SK-N-SH (cell line): ENCODE measurements at regions of chr2 and their contacts with region 1.

Region 1: DNA sequence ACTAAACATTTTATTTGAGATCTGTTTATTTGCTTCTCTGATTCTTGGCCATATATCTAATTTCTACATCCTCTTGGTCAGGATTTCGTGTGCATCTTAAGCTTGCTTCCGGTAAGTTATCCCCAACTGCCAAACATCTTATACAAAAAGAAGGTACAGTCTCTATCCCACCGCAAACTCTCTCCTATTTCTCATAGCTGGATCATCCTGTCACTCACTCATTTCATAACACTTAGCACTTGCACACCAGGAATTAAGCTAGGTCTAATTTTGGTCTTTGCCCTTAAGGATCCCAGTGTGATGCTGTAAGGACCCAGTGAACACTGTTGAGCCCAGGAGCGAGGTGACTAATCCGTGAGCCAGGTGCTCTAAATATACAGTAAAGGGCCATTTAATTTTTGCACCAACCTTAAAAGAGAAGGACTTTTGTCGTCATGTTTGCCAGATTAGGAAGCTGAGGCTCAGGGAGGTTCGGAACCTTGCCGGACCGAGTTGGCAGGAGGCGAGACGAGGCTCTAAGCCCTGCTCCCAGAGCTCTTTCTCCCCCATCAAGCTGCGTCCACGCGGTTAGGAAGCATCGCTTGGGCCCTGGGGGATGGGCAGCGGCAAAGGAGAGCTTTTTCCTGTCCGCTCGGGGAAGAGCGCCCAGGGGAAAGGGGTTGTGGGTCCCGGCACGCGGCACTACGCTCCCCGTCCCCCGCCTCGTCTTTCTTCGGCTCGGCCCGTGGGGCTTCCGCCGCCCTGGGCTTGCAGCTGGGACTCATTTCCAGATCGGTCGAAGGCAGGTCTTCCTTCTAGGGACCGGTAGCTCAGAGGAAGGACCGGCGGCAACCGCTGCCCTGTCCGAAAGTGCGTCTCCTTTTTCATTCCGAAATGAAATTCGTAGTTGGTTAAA is 4.1 kb upstream of the ITPRIPL1 start:
- DNase-seq: peak; percentile 76
- H3K4me3 ChIP-seq: peak overlapping the region; percentile 56 to 64
- H3K27ac ChIP-seq: peak overlapping the region; percentile 11 to 65; a peak in 2 of 4 replicates
- H3K4me1 ChIP-seq: peaks cover 4 to 10% of the 10 kb centered on the region in 2 experiments; a peak in 3 of 4 replicates
- H3K27me3 ChIP-seq: no peaks in the 10 kb centered on the region
- CTCF ChIP-seq: no peak
- EP300 ChIP-seq: no peak; a peak in 1 of 4 replicates
- RAD21 ChIP-seq: no peak

Region 2: DNA sequence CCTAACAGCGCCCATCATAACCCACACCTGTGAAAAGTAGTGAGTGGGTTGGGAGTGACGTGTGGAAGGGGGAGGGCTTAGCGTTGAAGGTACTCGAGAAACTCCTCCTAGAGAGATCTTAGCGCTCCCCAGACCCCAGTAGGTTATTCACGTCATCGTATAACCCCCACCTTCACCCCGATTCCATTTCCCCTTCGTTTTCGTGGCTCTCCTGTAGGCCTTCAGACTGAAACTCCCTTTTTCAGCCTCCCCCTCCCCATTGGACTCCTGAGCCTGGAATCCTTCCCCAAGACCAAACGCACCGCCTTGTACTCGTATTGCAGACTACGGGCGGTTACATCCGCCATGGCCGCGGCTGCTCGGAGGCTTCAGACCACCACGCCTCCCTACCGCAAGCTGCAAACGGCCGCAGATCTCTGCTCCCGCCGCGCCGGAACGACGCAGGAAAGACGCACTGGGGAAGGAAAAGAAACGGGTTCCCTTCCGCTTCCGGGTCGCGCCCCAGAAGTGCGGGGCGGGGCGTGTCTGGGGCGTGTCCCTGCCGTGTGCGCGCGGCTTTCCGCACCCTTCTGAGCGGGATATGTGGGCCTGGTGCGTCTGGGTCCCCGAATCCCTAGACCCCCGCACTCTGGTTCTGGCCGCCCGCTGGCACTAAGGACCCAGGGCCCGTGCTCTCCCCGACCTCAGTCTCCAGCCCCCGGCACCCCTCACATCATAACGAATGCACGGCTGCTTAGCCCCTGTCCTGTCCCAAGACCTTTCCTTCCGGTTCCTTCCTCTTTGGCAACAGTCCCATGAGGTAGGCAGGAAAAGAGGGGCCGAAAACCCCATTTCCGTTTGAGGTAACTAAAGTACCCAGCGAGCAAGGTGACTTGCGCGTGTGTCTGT is 15.6 kb before region 1 on chr2 and contains the start of gene SNRNP200:
- CTCF ChIA-PET with region 1: interaction called, 10 read pairs
- POLR2A ChIA-PET with region 1: interaction called, 20 read pairs
- DNase-seq: peak; percentile 91
- H3K4me3 ChIP-seq: peak within 1 kb of the TSS; percentile 64 to 87
- H3K27ac ChIP-seq: peak within 1 kb of the TSS; percentile 67 to 79
- H3K4me1 ChIP-seq: peaks cover 18 to 20% of the 10 kb centered on the region in 2 experiments
- H3K27me3 ChIP-seq: no peaks in the 10 kb centered on the region
- CTCF ChIP-seq: no peak
- EP300 ChIP-seq: no peak
- RAD21 ChIP-seq: no peak
- polyA plus RNA-seq, gene SNRNP200: 165 and 177 TPM in 2 replicates

Region 3: DNA sequence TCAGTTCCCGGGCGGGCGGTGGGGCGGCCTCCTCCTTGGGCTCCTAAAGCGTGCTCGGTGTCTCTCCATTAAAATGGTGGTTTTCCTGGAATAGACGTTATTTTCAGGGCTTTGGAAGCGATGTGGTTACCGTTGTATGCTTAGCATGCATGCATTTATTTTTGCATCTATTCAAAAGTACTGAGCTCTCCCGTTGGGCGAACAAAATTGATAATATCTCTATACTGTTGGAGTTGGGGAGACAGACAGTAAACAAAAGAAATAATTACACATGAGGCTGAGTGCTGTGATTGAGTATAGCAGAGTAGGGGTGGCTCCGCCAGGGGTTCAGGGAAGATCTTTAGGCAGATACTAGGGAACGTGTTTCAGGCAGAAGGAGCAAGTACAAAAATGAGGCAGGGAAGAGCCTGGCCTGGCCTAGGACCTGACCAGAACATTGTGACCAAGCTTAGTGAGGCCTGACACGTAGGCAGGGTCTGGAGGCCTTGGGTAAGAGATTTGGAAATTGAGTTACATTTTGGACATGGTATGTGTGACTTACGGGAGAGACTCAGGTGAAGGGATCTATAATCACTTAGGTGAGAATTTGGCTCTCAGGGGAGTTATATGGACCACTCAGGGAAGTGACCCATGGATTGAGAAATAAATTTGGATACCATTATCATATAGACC is 15.3 kb after region 1 on chr2:
- CTCF ChIA-PET with region 1: interaction called, 5 read pairs
- POLR2A ChIA-PET with region 1: interaction called, 15 read pairs
- DNase-seq: peak; percentile 37
- H3K4me3 ChIP-seq: peak overlapping the region; percentile 60 to 93
- H3K27ac ChIP-seq: peak overlapping the region; percentile 8 to 58; a peak in 3 of 4 replicates
- H3K4me1 ChIP-seq: peaks cover 5 to 6% of the 10 kb centered on the region in 2 experiments; a peak in 2 of 4 replicates
- H3K27me3 ChIP-seq: no peaks in the 10 kb centered on the region
- CTCF ChIP-seq: no peak
- EP300 ChIP-seq: no peak
- RAD21 ChIP-seq: no peak

Region 4: GRCh38 chr2:96353032-96353561 is 32.1 kb after region 1 on chr2:
- CTCF ChIA-PET with region 1: no interaction called
- POLR2A ChIA-PET with region 1: no interaction called
- DNase-seq: peak; percentile 30
- H3K4me3 ChIP-seq: peak overlapping the region; percentile 23 to 25; a peak in 3 of 4 replicates
- H3K27ac ChIP-seq: peak overlapping the region; percentile 78 to 96
- H3K4me1 ChIP-seq: peaks cover 10 to 19% of the 10 kb centered on the region in 2 experiments; a peak in 2 of 4 replicates
- H3K27me3 ChIP-seq: no peaks in the 10 kb centered on the region
- CTCF ChIP-seq: no peak
- EP300 ChIP-seq: no peak
- RAD21 ChIP-seq: no peak

Region 5: GRCh38 chr2:96437512-96437911 is 116.5 kb after region 1 on chr2:
- CTCF ChIA-PET with region 1: no interaction called
- POLR2A ChIA-PET with region 1: no interaction called
- DNase-seq: no peak
- H3K4me3 ChIP-seq: no peak overlapping the region
- H3K27ac ChIP-seq: no peak overlapping the region
- H3K4me1 ChIP-seq: no peaks in the 10 kb centered on the region
- H3K27me3 ChIP-seq: no peaks in the 10 kb centered on the region
- CTCF ChIP-seq: no peak
- EP300 ChIP-seq: no peak
- RAD21 ChIP-seq: no peak

Region 6: GRCh38 chr2:96523659-96524481 is 202.9 kb after region 1 on chr2:
- CTCF ChIA-PET with region 1: no interaction called
- POLR2A ChIA-PET with region 1: no interaction called
- DNase-seq: no peak
- H3K4me3 ChIP-seq: no peak overlapping the region
- H3K27ac ChIP-seq: no peak overlapping the region
- H3K4me1 ChIP-seq: peaks cover 0 to 5% of the 10 kb centered on the region in 2 experiments; a peak in 2 of 4 replicates
- H3K27me3 ChIP-seq: no peaks in the 10 kb centered on the region
- CTCF ChIP-seq: no peak
- EP300 ChIP-seq: no peak
- RAD21 ChIP-seq: no peak